Common myeloid progenitor, CD34-positive (primary cell): ENCODE measurements at regions of chr4 and their contacts with region 1.

Region 1: DNA sequence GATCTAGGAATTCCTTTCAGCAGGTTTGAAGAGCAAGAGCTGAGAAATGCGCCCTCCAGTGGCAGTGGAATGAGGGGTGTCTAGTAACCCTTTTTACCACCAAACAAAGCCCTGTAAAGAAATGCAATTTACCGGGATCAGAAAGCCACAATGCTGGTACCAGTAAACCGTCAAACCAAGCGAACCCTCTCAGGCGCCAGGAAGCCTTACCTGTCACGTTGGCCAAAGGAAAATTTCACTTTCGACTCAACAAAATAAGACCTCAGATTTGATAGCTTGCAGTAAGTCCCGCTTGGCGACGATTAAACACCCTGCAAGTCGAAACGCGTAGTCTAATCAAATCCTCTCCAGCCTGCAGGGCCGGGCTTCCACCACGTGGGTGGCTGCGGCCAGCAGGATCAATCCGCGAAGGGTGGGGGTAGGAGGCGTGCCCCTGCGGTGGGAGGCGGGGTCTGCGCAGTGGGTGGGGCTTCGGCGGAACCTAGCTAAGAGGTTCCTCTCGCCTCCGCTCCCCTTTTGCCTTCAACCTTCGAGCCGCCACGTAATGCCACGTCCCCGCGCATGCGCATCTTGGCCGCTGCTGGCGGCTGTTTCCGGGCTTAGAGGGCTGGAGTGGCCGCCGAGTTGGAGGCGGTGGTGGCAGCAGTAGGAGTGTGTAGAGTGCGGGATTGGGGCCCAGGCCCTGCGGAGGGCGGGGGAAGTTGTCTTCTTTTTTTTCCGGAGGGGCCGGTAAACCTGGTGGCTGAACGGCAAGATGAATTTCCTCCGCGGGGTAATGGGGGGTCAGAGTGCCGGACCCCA is at the start of gene USO1:
- DNase-seq: peak; percentile 99 to 100 (median 99)
- H3K4me3 ChIP-seq: peak within 1 kb of the TSS; percentile 91 to 99 (median 97)
- H3K27ac ChIP-seq: peak within 1 kb of the TSS; percentile 95
- H3K4me1 ChIP-seq: peaks cover 10 to 39% (median 33%) of the 10 kb centered on the region in 4 experiments
- H3K27me3 ChIP-seq: no peaks in the 10 kb centered on the region

Region 2: DNA sequence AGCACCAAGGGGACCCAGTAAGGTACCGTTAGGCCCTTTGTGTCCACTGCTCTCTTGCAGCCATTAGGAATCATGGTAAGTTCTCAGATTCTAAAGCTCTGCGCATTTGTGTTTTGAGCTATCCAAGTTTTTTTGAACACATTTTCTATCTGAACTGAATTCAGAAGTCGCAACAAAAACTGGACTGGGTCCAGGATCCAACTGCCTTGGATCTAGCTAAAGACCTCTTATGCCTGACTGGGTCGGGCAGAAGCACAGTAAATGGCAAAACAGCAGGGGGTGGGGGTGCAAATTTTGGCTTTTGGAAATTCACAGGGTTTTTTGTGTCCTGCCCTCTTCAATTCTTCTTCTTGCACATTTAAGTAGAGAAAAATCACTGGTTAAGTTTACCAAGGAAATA is 240.1 kb before region 1 on chr4:
- CTCF ChIA-PET with region 1: no interaction called
- POLR2A ChIA-PET with region 1: no interaction called
- DNase-seq: no peak
- H3K4me3 ChIP-seq: no peak overlapping the region
- H3K27ac ChIP-seq: no peak overlapping the region
- H3K4me1 ChIP-seq: no peaks in the 10 kb centered on the region
- H3K27me3 ChIP-seq: no peaks in the 10 kb centered on the region

Region 3: GRCh38 chr4:75673027-75673958 is 51.0 kb before region 1 on chr4 and contains the start of gene G3BP2:
- CTCF ChIA-PET with region 1: interaction called, 39 read pairs
- POLR2A ChIA-PET with region 1: interaction called, 14 read pairs
- DNase-seq: peak; percentile 99 to 100 (median 100)
- H3K4me3 ChIP-seq: peak within 1 kb of the TSS; percentile 95 to 100 (median 98)
- H3K27ac ChIP-seq: peak within 1 kb of the TSS; percentile 94 to 98
- H3K4me1 ChIP-seq: peaks cover 24 to 33% (median 31%) of the 10 kb centered on the region in 4 experiments
- H3K27me3 ChIP-seq: no peaks in the 10 kb centered on the region

Region 4: DNA sequence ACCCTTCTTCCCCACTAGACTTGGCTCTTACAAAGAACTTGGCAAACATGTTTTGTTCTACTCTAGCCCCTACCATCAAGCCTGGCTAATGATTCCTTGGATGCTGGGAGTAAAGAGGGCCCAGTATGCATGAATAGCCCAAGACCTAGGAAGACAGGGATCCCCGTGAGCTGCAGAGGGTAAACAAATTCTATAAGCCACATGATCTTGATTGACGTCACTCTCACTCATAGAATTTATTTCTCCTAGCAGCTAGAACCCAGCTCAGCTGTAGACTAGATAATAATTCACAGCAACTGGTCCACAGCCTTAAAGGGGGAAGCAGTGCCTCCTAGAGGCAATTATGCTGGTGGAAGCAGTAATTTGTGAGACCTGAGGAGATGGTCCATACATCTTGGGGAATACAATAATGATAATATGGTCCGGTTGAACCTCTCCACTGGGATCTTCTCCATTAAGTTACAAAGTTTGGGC is 16.0 kb before region 1 on chr4:
- CTCF ChIA-PET with region 1: interaction called, 25 read pairs
- POLR2A ChIA-PET with region 1: interaction called, 4 read pairs
- DNase-seq: peak; percentile 41 to 60 (median 54)
- H3K4me3 ChIP-seq: no peak overlapping the region
- H3K27ac ChIP-seq: no peak overlapping the region
- H3K4me1 ChIP-seq: peaks cover 0 to 10% (median 6%) of the 10 kb centered on the region in 4 experiments
- H3K27me3 ChIP-seq: no peaks in the 10 kb centered on the region

Region 5: DNA sequence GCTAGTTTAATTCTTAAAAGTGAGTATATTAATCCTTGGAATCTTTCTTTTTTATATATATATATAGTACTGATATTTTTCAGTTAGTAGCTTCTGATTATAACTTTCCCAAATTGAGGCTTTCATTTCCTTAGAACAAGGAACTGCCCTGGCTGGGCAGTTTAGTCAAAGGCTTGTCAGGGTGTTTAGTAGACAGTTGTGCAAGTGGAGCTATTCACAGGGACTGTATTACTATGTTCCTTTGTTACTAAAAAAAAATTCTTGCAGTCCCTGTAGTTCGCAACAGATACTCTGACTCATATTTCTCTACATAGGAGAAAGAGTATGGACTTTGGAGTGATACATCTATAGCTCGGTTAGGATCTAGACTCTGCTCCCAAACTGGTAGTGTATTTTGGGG is 20.9 kb after region 1 on chr4:
- CTCF ChIA-PET with region 1: interaction called, 51 read pairs
- POLR2A ChIA-PET with region 1: interaction called, 6 read pairs
- DNase-seq: peak; percentile 28 to 67 (median 61)
- H3K4me3 ChIP-seq: peak overlapping the region in 1 of 7 experiments; percentile 23
- H3K27ac ChIP-seq: peak overlapping the region; percentile 7 to 62
- H3K4me1 ChIP-seq: peaks cover 6 to 21% (median 16%) of the 10 kb centered on the region in 4 experiments
- H3K27me3 ChIP-seq: no peaks in the 10 kb centered on the region